Activated B cell treated with CpG ODN at 0.5 μM for 24 hours (primary cell): ENCODE measurements at regions of chr1 and their contacts with region 1.

Region 1: DNA sequence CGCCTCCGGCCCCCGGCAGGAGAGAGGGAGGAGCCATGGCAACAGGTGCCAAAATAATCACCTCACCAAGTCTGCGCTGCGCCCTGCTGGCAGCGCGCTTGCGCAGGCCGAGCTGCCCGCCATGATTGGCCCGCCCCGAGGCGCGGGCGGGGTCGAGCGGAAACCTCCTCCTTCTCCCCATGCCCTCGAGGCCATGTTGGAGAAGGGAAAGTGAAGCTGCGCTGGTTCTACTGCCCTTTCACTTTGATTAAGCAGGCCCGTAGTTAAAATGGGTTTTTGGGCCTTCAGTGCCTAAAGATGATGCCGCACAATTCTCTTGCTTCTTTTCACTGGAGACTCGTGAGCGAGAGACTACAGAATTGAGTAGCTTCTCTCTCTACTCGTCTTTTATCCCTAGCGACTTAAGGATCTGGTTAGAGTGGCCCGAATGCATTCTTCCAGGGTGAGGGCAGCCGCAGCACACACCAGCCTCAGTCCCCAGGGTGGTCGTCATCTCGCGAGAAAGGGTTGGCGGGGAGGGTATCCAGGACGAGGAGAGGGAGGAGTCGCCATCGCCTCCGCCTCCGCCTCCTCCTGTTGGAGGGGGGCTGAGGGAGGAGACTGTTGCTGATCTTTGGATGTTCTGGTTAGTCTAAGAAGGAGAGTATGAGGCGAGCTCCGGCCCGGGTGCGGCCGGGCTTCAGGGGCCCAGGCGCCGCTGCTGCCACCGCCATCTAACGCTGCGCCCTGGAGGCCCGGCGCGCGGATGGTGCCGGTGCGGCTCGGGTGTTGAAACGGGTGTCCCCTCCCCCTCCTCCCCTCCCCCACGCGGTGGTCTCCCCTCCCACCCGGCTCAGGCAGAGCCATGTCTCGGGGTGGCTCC is at the start of gene DCAF6:
- DNase-seq: peak; percentile 92
- ATAC-seq: peak; percentile 79
- H3K4me3 Mint-ChIP-seq: peak within 1 kb of the TSS; percentile 88
- H3K27ac Mint-ChIP-seq: peak within 1 kb of the TSS; percentile 100
- H3K4me1 Mint-ChIP-seq: peaks cover 35% of the 10 kb centered on the region
- H3K27me3 Mint-ChIP-seq: no peaks in the 10 kb centered on the region
- CTCF ChIP-seq: no peak
- total RNA-seq, gene DCAF6: 23.1 and 32.9 TPM in 2 replicates

Region 2: DNA sequence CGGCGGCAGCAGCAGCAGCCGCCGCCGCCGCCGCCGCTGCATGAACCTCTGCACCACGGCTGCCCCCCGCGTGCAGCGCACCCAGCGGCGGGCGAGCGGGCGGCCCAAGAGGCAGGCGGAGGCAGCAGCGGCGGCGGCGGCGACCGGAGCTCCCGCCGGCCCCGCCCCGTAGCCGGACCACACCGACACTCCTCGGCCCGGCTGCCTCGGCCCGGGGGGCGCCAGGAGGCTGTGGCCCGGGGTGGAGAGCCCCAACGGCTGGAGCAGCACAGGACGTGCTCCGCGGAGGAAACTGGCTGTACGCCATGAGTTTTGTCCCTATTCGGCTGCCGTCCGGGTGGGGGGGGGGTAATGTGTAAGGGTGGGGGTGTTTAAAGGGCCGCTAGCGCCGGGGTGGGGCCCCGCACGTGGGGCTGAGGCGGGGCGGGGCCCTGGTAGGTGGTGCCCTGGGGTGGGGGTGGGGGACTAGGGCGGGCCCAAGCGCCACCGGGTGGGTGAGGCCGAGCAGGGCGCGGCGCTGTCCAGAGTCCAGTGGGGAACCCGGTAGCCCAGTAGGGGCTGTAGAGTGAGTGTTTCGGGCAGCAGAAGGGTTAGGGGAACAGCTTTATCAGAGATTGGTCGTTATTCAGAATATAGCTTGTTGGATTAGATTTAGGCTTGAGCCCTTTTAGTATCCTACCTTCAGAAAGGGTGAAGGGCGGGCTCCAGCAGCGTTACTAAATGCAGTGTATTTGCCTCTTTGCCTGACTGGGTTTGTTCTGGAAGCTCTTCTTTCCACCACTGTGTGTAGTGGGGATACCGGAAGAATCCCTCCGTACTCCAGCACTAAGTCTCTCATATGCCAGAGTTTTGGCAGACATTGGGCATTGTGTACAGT is 1769.4 kb before region 1 on chr1 and contains the start of gene FAM78B:
- CTCF ChIA-PET with region 1: no interaction called
- POLR2A ChIA-PET with region 1: no interaction called
- intact Hi-C with region 1: loop called (anchors 5 kb)
- DNase-seq: peak; percentile 55
- ATAC-seq: peak; percentile 84
- H3K4me3 Mint-ChIP-seq: peak within 1 kb of the TSS; percentile 77
- H3K27ac Mint-ChIP-seq: no peak within 1 kb of the TSS
- H3K4me1 Mint-ChIP-seq: peaks cover 19% of the 10 kb centered on the region
- H3K27me3 Mint-ChIP-seq: peaks cover 25% of the 10 kb centered on the region
- CTCF ChIP-seq: no peak
- total RNA-seq, gene FAM78B: 0.64 and 1.00 TPM in 2 replicates

Region 3: GRCh38 chr1:166875734-166876539 is 1060.4 kb before region 1 on chr1 and contains the start of gene TADA1:
- CTCF ChIA-PET with region 1: no interaction called
- POLR2A ChIA-PET with region 1: interaction called, 9 read pairs
- intact Hi-C with region 1: loop called (anchors 1 kb)
- DNase-seq: peak; percentile 94
- ATAC-seq: peak; percentile 93
- H3K4me3 Mint-ChIP-seq: peak within 1 kb of the TSS; percentile 96
- H3K27ac Mint-ChIP-seq: peak within 1 kb of the TSS; percentile 98
- H3K4me1 Mint-ChIP-seq: peaks cover 30% of the 10 kb centered on the region
- H3K27me3 Mint-ChIP-seq: no peaks in the 10 kb centered on the region
- CTCF ChIP-seq: no peak
- total RNA-seq, gene TADA1: 13.6 and 15.3 TPM in 2 replicates

Region 4: GRCh38 chr1:167627865-167628641 is 308.2 kb before region 1 on chr1:
- CTCF ChIA-PET with region 1: no interaction called
- POLR2A ChIA-PET with region 1: interaction called, 4 read pairs
- intact Hi-C with region 1: loop called (anchors 1 kb)
- DNase-seq: peak; percentile 52
- ATAC-seq: peak; percentile 70
- H3K4me3 Mint-ChIP-seq: peak overlapping the region; percentile 94
- H3K27ac Mint-ChIP-seq: peak overlapping the region; percentile 98
- H3K4me1 Mint-ChIP-seq: peaks cover 76% of the 10 kb centered on the region
- H3K27me3 Mint-ChIP-seq: no peaks in the 10 kb centered on the region
- CTCF ChIP-seq: no peak

Region 5: GRCh38 chr1:168082008-168082876 is 145.9 kb after region 1 on chr1:
- CTCF ChIA-PET with region 1: interaction called, 6 read pairs
- POLR2A ChIA-PET with region 1: no interaction called
- intact Hi-C with region 1: loop called (anchors 5 kb)
- DNase-seq: peak; percentile 40
- ATAC-seq: peak; percentile 92
- H3K4me3 Mint-ChIP-seq: no peak overlapping the region
- H3K27ac Mint-ChIP-seq: no peak overlapping the region
- H3K4me1 Mint-ChIP-seq: no peaks in the 10 kb centered on the region
- H3K27me3 Mint-ChIP-seq: no peaks in the 10 kb centered on the region
- CTCF ChIP-seq: no peak

Region 6: GRCh38 chr1:168225476-168226190 is 289.3 kb after region 1 on chr1 and contains the start of gene SFT2D2:
- CTCF ChIA-PET with region 1: no interaction called
- POLR2A ChIA-PET with region 1: interaction called, 17 read pairs
- intact Hi-C with region 1: loop called (anchors 2 kb)
- DNase-seq: peak; percentile 85
- ATAC-seq: peak; percentile 92
- H3K4me3 Mint-ChIP-seq: peak within 1 kb of the TSS; percentile 96
- H3K27ac Mint-ChIP-seq: peak within 1 kb of the TSS; percentile 93
- H3K4me1 Mint-ChIP-seq: peaks cover 47% of the 10 kb centered on the region
- H3K27me3 Mint-ChIP-seq: no peaks in the 10 kb centered on the region
- CTCF ChIP-seq: no peak
- total RNA-seq, gene SFT2D2: 62.7 and 63.4 TPM in 2 replicates

Region 7: GRCh38 chr1:169485544-169486278 is 1549.4 kb after region 1 on chr1 and contains the start of gene SLC19A2:
- CTCF ChIA-PET with region 1: no interaction called
- POLR2A ChIA-PET with region 1: no interaction called
- intact Hi-C with region 1: loop called (anchors 5 kb)
- DNase-seq: peak; percentile 86
- ATAC-seq: peak; percentile 98
- H3K4me3 Mint-ChIP-seq: peak within 1 kb of the TSS; percentile 88
- H3K27ac Mint-ChIP-seq: peak within 1 kb of the TSS; percentile 82
- H3K4me1 Mint-ChIP-seq: peaks cover 27% of the 10 kb centered on the region
- H3K27me3 Mint-ChIP-seq: no peaks in the 10 kb centered on the region
- CTCF ChIP-seq: no peak
- total RNA-seq, gene SLC19A2: 3.0 and 3.6 TPM in 2 replicates